Upper lobe of right lung (tissue), 1 donor: ENCODE measurements at regions of chr5 and their contacts with region 1.

Region 1: DNA sequence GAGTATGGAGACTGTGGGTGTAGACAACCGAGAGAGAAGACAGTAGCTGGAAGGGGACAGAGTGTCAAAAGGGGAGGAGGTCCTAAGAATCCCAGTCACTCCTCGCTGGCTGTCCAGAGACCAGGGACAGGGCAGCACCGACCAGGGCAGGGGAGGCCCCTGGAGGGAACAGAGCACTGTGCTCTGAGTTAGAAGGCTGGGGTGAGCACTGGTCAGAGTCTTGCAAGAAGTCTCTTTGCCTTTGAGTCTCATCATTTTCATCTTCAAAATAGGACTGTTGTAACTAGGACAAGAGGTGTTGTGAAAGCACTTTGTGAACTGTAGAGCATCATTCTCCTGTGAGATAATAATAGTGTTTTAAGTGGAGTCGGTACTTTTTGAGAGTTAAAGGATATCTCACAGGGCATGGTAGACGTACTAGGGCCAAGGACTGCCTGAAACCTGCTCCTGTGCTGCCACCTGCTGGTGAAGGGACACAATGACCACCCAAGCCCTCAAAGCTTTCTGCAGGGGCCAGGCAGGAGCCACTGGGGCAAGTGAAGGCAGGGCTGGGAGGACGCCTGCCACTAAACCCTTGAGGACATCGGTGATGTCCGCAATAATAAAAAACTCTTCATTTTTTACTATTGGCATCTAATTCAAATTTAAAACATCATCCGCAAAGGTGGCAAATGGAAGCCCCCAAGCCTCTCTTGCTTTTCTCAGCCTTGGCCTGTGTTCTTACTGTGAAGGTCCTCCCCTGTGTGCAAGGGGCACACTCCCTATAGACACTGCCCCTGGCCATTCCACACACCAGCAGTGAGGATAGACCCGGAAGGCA is 28.2 kb downstream of the SLC6A7 start:
- DNase-seq: peak; percentile 86
- ATAC-seq: peak; percentile 93
- H3K4me3 ChIP-seq: no peak overlapping the region
- H3K27ac ChIP-seq: no peak overlapping the region
- H3K4me1 ChIP-seq: no peaks in the 10 kb centered on the region
- H3K27me3 ChIP-seq: no peaks in the 10 kb centered on the region
- CTCF ChIP-seq: peak; percentile 95

Region 2: DNA sequence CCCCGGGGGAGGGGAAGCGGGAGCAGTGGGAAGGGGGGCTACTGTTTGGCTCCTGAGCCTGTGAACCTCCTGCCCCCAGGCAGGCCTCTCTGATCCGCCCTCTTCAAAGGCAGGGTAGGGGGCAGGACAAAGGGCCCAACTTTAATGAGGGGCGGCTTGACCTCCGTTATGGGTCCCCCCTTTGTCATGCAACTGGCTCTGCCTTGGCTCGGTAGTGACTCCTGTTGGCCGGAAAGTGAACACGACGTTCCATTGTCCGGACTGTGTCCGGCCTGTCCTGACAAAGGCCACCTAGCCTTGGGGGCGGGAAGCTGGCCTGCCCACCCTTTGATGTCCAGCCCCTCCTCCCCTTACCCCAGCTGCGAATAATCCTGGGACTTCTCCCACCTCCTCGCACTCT is 50.2 kb before region 1 on chr5:
- intact Hi-C with region 1: loop called (anchors 5 kb)
- DNase-seq: no peak
- ATAC-seq: no peak
- H3K4me3 ChIP-seq: no peak overlapping the region
- H3K27ac ChIP-seq: no peak overlapping the region
- H3K4me1 ChIP-seq: peaks cover 2% of the 10 kb centered on the region
- H3K27me3 ChIP-seq: peaks cover 12% of the 10 kb centered on the region
- CTCF ChIP-seq: no peak

Region 3: GRCh38 chr5:150329881-150330876 is 112.1 kb after region 1 on chr5:
- intact Hi-C with region 1: no loop called
- DNase-seq: no peak
- ATAC-seq: peak; percentile 8
- H3K4me3 ChIP-seq: no peak overlapping the region
- H3K27ac ChIP-seq: no peak overlapping the region
- H3K4me1 ChIP-seq: no peaks in the 10 kb centered on the region
- H3K27me3 ChIP-seq: no peaks in the 10 kb centered on the region
- CTCF ChIP-seq: no peak